Activated T-helper 1 cell treated with anti-CD3 and anti-CD28 coated beads, Interleukin-12 subunit alpha, Interleukin-12 subunit beta, Interleukin-2, Interleukin-4 antibody, amounts not matched to agents 30 ng/mL and 10 ng/mL and 1 ng/mL, durations not matched to agents 14 hours and 24 hours and 36 hours (primary cell): ENCODE measurements at regions of chr1 and their contacts with region 1.

Region 1: GRCh38 chr1:27662707-27663393 is 9.1 kb downstream of the IFI6 start:
- DNase-seq: peak; percentile 83
- H3K4me3 Mint-ChIP-seq: peak overlapping the region; percentile 70
- H3K27ac Mint-ChIP-seq: peak overlapping the region; percentile 97
- H3K4me1 Mint-ChIP-seq: peaks cover 59% of the 10 kb centered on the region
- H3K27me3 Mint-ChIP-seq: no peaks in the 10 kb centered on the region

Region 2: DNA sequence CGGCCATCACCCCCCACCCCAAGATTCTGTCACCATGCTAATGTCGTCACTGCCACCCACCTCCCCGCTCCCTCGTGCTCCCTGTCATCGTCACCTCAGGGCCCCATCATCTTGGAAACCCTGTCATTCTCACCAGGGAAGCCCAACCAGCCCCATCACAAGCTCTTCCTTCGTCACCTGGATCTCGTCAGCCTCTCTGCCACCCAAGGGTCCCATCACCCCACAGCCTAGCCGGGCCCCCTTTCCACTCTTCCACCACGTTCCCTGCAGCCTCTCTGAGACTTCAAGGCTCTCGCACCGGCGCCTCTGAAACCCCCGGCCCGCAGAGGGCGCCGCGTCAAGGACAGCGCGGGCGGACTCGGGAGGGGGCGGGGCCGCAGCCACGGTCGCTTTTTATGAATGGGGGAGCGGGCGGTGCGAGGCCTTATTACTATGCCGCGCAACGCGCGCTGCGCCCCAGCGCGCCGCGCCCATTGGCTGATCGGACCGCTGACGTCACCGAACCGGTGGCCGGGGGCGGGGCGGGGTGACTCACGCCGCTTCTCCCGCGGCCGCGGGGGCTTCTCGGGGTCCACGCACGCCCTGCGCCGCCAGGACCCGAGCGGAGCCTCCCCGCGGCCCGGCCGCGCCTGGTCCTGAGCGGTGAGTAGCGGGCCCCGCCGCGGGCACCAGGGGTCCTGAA is 270.6 kb before region 1 on chr1 and contains the start of gene GPR3:
- intact Hi-C with region 1: loop called (anchors 1 kb)
- DNase-seq: peak; percentile 91
- H3K4me3 Mint-ChIP-seq: peak within 1 kb of the TSS; percentile 82
- H3K27ac Mint-ChIP-seq: peak within 1 kb of the TSS; percentile 93
- H3K4me1 Mint-ChIP-seq: peaks cover 12% of the 10 kb centered on the region
- H3K27me3 Mint-ChIP-seq: peaks cover 12% of the 10 kb centered on the region
- total RNA-seq, gene GPR3: 3.2 and 4.0 TPM in 2 replicates

Region 3: DNA sequence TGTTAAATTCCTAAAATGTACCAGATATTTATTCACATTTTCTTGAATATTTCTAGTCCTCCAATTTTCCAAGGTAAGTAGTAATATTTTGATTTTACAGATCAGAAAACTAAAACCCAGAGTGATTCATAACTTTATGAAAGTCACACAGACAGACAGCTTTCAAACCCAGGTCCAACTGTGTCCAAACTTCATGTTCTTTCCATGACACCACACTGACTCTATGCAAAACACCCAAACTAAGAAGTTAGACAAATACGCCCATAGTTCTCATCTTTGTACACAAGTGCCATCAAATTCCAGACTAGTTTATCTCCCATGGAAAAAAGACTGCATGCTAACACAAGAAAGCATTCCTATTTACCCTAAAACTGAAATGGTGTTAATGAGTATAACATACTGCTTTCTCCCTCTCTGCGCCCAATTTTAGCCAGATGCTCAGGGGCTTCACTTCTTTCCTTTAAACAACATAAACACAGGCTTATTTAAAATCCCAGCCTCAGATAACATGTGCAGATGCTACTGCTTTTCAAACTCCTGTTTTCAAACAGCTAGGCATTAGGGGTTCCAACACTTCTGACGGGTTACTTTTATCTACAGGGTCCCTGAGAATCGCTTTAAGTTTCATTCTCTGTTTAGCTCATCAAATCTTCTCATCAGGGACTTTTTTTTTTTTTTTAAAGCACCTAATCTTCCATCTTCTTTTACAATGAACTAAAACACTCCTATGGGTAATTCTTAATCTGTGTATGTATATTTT is 217.5 kb before region 1 on chr1:
- intact Hi-C with region 1: loop called (anchors 1 kb)
- DNase-seq: no peak
- H3K4me3 Mint-ChIP-seq: peak overlapping the region; percentile 73
- H3K27ac Mint-ChIP-seq: peak overlapping the region; percentile 96
- H3K4me1 Mint-ChIP-seq: peaks cover 37% of the 10 kb centered on the region
- H3K27me3 Mint-ChIP-seq: no peaks in the 10 kb centered on the region

Region 4: DNA sequence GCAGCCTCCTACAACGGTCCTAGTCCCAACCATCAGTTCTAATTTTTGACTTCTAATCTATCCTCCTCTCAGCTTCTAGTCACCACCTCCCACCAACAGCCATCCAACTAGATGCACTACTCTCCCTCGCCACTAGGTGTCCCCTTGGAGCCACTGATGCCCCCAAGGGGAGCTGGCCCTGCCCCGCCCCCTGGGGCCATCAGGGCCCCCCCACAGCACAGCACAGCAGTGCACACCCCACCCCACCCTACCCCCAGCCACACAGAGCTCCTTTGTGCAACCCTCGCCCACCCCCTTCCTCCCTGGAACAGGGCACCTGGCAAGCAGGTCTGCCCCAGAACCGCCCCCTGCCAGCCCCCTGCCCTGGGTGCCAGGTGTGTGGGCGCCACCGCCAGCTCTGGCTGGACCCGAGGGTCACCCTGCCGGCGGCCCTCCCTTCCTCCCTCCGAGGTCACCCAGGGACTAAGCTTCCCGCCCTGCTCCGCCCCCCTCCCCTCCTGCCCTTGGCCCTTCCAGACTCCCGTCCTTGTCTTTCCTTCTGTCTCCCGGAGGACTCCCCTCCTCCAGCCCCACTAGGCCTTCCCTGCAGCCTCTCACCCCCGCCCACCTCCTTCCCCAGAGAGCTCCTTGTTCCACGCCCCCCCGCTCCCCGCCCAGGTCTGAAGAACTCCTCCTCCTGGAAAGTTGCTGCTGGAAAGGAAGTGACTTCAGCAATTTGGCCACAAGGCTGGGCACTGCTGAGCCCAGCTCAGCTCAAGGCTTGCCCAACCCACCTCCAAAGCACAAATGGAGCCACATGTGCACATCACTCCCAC is 105.9 kb before region 1 on chr1:
- intact Hi-C with region 1: loop called (anchors 1 kb)
- DNase-seq: peak; percentile 65
- H3K4me3 Mint-ChIP-seq: peak overlapping the region; percentile 54
- H3K27ac Mint-ChIP-seq: peak overlapping the region; percentile 84
- H3K4me1 Mint-ChIP-seq: peaks cover 49% of the 10 kb centered on the region
- H3K27me3 Mint-ChIP-seq: no peaks in the 10 kb centered on the region

Region 5: DNA sequence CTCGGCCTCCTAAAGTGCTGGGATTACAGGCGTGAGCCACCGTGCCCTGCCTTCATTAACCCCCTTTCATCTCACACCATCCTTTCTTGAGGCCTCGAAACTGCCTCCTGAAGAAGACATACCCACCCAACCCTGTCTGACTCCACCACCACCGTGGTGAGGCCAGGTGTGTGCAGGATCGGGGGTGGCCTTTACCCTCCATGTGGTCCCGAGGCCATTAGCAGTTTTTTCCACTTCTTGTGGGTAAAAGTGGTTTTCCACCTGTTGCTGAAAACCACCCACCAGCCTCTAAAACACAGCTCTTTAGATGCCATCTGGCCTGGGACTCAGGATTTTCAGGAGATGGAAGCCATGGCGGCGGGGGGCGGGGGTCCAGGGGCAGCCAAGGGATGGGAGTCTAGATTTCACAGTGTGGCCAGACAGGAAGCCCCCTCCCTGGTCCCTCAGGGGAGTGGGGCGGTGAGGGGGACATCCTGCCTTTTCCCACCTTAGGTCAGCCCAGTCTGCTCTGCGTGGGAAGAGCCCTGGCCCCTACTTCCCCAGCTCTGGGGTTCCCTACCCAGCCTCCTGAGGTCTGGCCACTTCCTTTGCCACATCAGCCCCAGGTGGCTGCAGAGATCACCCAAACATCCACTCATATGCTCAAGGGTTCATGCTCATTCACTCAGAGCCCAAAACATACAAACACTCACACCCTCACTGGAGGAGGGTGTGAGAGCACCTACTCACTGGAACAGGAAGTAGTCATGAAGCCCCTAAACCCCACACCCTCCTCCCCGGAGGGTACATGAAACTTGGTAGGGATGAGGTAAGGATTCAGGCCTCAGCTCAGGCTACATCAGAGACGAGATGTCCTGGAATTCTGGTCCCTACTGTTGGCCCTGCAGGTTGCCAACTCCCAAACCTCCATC is 30.2 kb before region 1 on chr1:
- intact Hi-C with region 1: loop called (anchors 1 kb)
- DNase-seq: peak; percentile 59
- H3K4me3 Mint-ChIP-seq: peak overlapping the region; percentile 74
- H3K27ac Mint-ChIP-seq: peak overlapping the region; percentile 93
- H3K4me1 Mint-ChIP-seq: peaks cover 76% of the 10 kb centered on the region
- H3K27me3 Mint-ChIP-seq: no peaks in the 10 kb centered on the region

Region 6: DNA sequence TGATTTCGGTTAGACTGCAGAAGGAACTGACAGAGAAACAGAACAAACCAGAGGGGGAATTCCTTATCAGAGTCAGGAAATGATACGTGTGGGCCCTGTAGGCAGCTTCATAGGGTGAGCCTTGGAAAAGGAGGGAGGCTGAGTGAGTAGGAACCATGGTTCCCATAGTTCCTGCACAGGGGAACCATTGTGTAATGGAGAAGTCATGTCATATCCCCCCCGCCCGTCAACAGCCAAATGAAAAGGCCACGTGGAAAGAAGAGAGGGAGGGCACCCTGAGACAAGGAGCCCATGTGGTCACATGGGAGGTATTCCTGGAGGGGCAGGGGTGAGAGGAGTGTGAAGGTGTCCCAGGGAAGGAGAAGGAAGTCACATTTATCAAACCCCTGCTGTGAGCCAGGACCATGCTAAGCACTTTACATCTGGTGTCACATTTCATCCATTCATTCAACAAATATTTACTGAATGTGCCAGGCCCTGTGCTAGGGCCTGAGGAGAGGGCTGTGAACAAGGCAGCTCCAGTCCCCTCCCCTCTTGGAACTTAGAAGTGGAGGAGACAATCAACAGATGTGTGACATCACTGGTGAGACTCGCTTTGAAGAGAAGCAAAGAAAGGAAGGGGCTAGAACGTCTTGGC is 12.2 kb before region 1 on chr1:
- intact Hi-C with region 1: loop called (anchors 1 kb)
- DNase-seq: no peak
- H3K4me3 Mint-ChIP-seq: peak overlapping the region; percentile 3
- H3K27ac Mint-ChIP-seq: peak overlapping the region; percentile 96
- H3K4me1 Mint-ChIP-seq: peaks cover 32% of the 10 kb centered on the region
- H3K27me3 Mint-ChIP-seq: no peaks in the 10 kb centered on the region